ENCODE measurements at regions of chr9 and their contacts with region 1.

Region 1: GRCh38 chr9:124839612-124840299 is 13.5 kb upstream of the WDR38 start:
- DNase-seq: no peak
- ATAC-seq: peak; percentile 38
- H3K4me3 ChIP-seq: no peak overlapping the region
- H3K27ac ChIP-seq: peak overlapping the region in 3 of 4 donors; percentile 29 to 52 (median 44)
- H3K4me1 ChIP-seq: peaks cover 31% of the 10 kb centered on the region
- H3K27me3 ChIP-seq: no peaks in the 10 kb centered on the region
- CTCF ChIP-seq: peak; percentile 29 to 53 (median 41)
- POLR2A ChIP-seq: no peak

Region 2: GRCh38 chr9:124800306-124801259 is 39.2 kb before region 1 on chr9:
- intact Hi-C with region 1: loop called (anchors 5 kb)
- DNase-seq: peak; percentile 44 to 68 (median 49)
- ATAC-seq: peak; percentile 23
- H3K4me3 ChIP-seq: no peak overlapping the region
- H3K27ac ChIP-seq: peak overlapping the region; percentile 9 to 72 (median 59)
- H3K4me1 ChIP-seq: peaks cover 61% of the 10 kb centered on the region
- H3K27me3 ChIP-seq: no peaks in the 10 kb centered on the region
- CTCF ChIP-seq: no peak
- POLR2A ChIP-seq: no peak

Measured in body of pancreas (tissue), 4 donors.